MCF 10A (cell line): ENCODE measurements at regions of chr7 and their contacts with region 1.

Region 1: DNA sequence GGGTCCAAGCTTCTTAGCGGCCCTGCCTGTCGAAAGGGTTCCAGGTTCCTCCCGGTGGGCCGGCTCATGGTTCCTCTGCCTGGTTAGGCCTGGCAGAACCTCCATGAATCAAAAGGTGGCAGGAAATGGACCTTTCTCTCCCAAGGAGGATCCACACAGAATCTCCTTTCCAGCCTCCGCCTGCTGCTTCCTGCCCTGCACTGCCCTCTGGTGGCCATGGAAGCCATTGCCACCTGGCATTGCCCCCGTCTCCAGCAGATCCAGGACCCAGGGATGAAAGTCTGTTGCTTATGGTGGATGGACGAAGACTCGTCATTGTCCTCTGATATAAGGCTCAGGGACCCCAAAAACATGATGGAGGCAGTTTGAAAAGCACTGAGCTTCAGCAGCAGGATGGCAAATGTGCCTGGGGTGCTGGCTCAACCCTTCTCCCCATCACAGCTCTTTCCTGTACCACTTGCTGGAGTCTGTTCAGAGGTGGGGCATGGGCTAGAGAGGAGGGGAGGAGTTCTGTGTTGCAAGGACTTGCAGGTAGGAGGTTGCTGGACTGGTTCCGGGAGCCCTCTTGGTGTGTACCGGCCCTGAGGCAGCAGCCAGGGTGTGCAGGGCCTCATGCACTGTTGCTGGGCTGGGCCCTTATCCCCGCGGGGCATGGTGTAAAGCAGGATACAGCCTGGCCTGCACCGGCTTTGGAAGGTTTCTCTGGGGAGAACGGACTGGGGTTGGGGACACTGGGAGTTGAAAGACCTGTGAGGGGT is 11.3 kb upstream of the INMT start:
- DNase-seq: peak; percentile 67
- H3K4me3 Mint-ChIP-seq: no peak overlapping the region
- H3K27ac Mint-ChIP-seq: no peak overlapping the region
- H3K4me1 Mint-ChIP-seq: no peaks in the 10 kb centered on the region
- H3K27me3 Mint-ChIP-seq: peaks cover 27% of the 10 kb centered on the region
- CTCF ChIP-seq: peak; percentile 99

Region 2: DNA sequence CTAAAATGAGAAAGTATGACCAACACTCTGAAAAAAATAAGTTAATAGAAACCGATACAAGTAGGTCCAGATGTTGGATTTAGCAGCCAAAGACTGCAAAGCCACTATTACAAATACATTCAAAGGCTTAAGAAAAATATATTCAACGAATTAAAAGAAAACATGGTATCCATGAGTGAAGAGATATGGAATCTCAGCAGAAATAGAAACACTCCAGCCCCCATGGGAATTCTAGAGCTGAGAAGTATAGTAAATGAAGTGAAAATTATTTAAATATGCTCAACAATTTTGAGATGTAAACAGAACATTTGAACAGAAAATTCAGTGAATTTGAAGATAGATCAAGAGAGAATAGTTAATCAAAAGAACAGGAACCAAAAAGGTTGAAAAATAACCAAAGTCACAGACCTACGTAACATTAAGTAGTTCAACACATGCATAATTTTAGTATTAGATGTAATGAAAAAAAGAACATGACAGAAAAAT is 1006.3 kb before region 1 on chr7:
- CTCF ChIA-PET with region 1: no interaction called
- POLR2A ChIA-PET with region 1: no interaction called
- intact Hi-C with region 1: no loop called
- DNase-seq: no peak
- H3K4me3 Mint-ChIP-seq: no peak overlapping the region
- H3K27ac Mint-ChIP-seq: no peak overlapping the region
- H3K4me1 Mint-ChIP-seq: no peaks in the 10 kb centered on the region
- H3K27me3 Mint-ChIP-seq: peaks cover 11% of the 10 kb centered on the region
- CTCF ChIP-seq: no peak

Region 3: DNA sequence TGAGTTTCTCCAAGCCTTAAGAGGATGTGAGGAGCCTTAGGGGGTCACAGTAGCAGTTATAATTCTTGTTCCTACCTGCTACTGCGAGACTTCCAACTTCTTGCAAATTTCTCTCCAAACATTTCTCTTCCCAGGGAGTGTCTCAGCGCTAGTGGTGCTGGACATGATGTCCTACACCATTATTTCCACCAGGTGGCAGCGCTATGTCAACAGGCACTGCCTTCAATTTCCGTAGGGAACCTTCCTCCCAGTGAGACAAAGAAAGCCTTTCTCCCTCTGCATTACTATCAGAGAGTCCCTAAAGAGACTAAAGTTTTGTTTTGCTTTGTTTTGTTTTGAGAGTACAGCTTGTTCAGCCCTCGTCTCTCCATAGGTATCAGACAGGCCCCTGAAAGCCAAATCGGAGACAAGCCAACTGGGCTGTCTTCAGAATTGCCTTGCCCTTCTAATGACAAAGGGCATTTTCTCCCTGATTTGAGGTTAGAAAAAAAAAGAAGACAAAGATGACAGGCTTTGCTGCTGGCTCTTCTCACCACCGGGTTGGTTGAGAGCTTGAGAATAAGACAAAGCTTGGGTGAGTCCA is 191.8 kb before region 1 on chr7:
- CTCF ChIA-PET with region 1: interaction called, 13 read pairs
- POLR2A ChIA-PET with region 1: no interaction called
- intact Hi-C with region 1: loop called (anchors 1 kb)
- DNase-seq: peak; percentile 84
- H3K4me3 Mint-ChIP-seq: no peak overlapping the region
- H3K27ac Mint-ChIP-seq: peak overlapping the region; percentile 92
- H3K4me1 Mint-ChIP-seq: peaks cover 32% of the 10 kb centered on the region
- H3K27me3 Mint-ChIP-seq: no peaks in the 10 kb centered on the region
- CTCF ChIP-seq: peak; percentile 78

Region 4: DNA sequence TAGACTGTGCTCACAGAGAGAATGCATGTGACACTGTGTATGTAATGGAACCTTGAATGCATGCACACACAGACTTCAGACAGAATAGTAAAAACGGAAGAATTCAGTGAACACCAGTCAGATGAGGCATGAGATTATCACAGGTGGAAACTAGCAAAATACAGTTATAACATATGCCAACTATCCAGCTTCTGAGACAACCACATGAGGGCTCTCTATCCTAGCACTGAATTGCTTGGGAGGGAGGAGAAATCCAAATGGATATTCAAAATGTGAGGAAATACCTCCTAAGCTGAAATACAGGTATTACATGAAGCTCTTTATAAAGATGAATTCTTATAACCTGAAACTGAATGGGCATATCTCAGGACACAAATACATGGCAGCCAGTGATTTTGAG is 115.3 kb before region 1 on chr7:
- CTCF ChIA-PET with region 1: interaction called, 22 read pairs
- POLR2A ChIA-PET with region 1: no interaction called
- intact Hi-C with region 1: loop called (anchors 5 kb)
- DNase-seq: no peak
- H3K4me3 Mint-ChIP-seq: no peak overlapping the region
- H3K27ac Mint-ChIP-seq: no peak overlapping the region
- H3K4me1 Mint-ChIP-seq: no peaks in the 10 kb centered on the region
- H3K27me3 Mint-ChIP-seq: no peaks in the 10 kb centered on the region
- CTCF ChIP-seq: no peak

Region 5: GRCh38 chr7:30707391-30708357 is 32.9 kb before region 1 on chr7:
- CTCF ChIA-PET with region 1: interaction called, 14 read pairs
- POLR2A ChIA-PET with region 1: no interaction called
- intact Hi-C with region 1: no loop called
- DNase-seq: no peak
- H3K4me3 Mint-ChIP-seq: no peak overlapping the region
- H3K27ac Mint-ChIP-seq: no peak overlapping the region
- H3K4me1 Mint-ChIP-seq: no peaks in the 10 kb centered on the region
- H3K27me3 Mint-ChIP-seq: peaks cover 21% of the 10 kb centered on the region
- CTCF ChIP-seq: no peak

Region 6: GRCh38 chr7:30764030-30764975 is 23.7 kb after region 1 on chr7:
- CTCF ChIA-PET with region 1: interaction called, 27 read pairs
- POLR2A ChIA-PET with region 1: no interaction called
- intact Hi-C with region 1: no loop called
- DNase-seq: no peak
- H3K4me3 Mint-ChIP-seq: no peak overlapping the region
- H3K27ac Mint-ChIP-seq: no peak overlapping the region
- H3K4me1 Mint-ChIP-seq: peaks cover 5% of the 10 kb centered on the region
- H3K27me3 Mint-ChIP-seq: no peaks in the 10 kb centered on the region
- CTCF ChIP-seq: no peak

Region 7: GRCh38 chr7:31082447-31082846 is 341.8 kb after region 1 on chr7:
- CTCF ChIA-PET with region 1: no interaction called
- POLR2A ChIA-PET with region 1: no interaction called
- intact Hi-C with region 1: no loop called
- DNase-seq: no peak
- H3K4me3 Mint-ChIP-seq: no peak overlapping the region
- H3K27ac Mint-ChIP-seq: no peak overlapping the region
- H3K4me1 Mint-ChIP-seq: no peaks in the 10 kb centered on the region
- H3K27me3 Mint-ChIP-seq: peaks cover 41% of the 10 kb centered on the region
- CTCF ChIP-seq: no peak